Psoas muscle (tissue), 8 donors: ENCODE measurements at regions of chr20 and their contacts with region 1.

Region 1: GRCh38 chr20:45362804-45363610 is at the start of gene SYS1:
- DNase-seq: peak; percentile 98 to 99
- ATAC-seq: peak; percentile 75 to 85 (median 82)
- H3K4me3 ChIP-seq: peak within 1 kb of the TSS; percentile 83
- H3K27ac ChIP-seq: peak within 1 kb of the TSS; percentile 93
- H3K4me1 ChIP-seq: peaks cover 36% of the 10 kb centered on the region
- H3K27me3 ChIP-seq: no peaks in the 10 kb centered on the region
- CTCF ChIP-seq: peak; percentile 90
- total RNA-seq, gene SYS1: 17.1 to 29.6 (median 22.9) TPM

Region 2: DNA sequence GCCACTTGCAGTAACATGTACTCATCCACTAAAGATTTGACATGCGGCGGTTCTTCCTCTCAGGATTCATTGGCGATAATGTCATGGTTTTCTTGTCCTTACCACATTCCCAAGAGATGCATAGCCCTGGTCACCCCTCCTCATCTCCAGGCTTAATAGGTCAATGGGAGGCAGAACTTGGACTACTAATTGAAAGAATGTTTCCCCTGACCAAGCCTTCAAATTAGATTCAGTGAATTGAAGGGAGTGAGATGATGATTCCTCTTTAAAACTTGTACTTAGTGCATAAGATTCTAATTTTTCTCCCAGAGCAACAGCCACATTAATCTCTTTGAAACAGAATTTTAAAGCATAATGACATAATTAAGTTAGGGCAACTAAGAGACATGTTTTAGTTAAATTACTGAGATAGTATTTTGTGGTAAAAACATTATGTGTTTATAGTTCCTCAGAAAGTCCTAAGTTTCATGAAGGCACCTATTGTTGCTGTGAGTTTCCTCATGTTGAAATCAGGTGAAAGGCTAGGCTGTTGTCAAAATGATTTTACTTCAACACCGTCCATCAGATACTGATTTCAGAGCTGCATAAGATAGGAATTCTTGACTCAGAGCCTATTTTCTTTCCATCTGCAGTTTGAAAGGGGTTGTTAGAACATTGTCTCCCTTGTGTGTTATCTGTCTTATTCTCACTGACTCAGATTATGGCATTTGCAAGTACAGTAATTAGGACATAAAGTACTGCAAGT is 348.2 kb before region 1 on chr20:
- intact Hi-C with region 1: no loop called
- DNase-seq: no peak
- ATAC-seq: peak in 1 of 4 donors; percentile 25
- H3K4me3 ChIP-seq: no peak overlapping the region
- H3K27ac ChIP-seq: no peak overlapping the region
- H3K4me1 ChIP-seq: no peaks in the 10 kb centered on the region
- H3K27me3 ChIP-seq: no peaks in the 10 kb centered on the region
- CTCF ChIP-seq: no peak

Region 3: DNA sequence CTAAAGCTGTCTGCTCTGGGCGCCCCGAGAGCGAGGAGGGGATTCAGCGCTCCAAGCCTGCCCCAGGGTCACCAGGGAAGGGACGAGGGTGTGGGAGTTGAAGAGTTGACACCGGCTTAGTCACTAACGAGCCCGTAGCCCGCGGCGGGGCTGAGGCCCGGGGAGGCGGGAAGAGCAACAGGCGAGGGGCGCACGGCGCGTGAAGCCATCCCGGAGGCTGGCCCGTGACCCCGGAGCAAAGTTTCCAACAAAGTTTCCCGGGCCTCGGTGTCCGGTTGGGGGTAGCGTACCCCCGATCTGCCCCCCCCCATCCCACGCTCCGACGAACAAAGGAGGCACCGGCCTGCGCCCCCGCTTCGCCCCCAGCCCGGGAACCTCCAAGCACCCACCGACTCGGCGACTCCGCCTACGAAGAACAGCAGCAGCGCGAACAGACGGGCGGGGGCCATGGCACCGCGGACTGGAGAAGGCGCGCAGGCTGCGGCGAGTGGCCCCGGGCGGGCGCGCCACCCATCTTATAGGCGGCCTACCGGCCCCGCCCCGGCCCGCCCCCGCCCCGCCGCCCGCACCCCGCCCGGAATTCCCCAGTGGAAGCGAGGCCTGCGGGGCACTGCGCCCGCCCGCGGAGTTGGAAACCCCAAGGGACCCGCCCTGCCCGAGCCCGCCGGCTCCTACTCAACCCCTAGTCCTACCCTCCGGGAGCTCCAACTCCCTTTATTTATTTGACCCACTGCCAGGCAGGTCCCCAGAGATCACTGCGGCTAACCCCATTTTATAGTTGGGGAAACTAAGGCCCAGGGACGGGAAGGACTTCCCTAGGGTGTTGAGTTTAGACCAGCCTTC is 14.8 kb before region 1 on chr20 and contains the start of gene SDC4:
- intact Hi-C with region 1: loop called in 1 of 2 experiments (anchors 2 kb)
- DNase-seq: peak; percentile 79 to 88
- ATAC-seq: peak; percentile 62 to 74 (median 68)
- H3K4me3 ChIP-seq: peak within 1 kb of the TSS; percentile 79
- H3K27ac ChIP-seq: peak within 1 kb of the TSS; percentile 94
- H3K4me1 ChIP-seq: peaks cover 28% of the 10 kb centered on the region
- H3K27me3 ChIP-seq: no peaks in the 10 kb centered on the region
- CTCF ChIP-seq: no peak
- total RNA-seq, gene SDC4: 32.2 to 283 (median 161) TPM

Region 4: DNA sequence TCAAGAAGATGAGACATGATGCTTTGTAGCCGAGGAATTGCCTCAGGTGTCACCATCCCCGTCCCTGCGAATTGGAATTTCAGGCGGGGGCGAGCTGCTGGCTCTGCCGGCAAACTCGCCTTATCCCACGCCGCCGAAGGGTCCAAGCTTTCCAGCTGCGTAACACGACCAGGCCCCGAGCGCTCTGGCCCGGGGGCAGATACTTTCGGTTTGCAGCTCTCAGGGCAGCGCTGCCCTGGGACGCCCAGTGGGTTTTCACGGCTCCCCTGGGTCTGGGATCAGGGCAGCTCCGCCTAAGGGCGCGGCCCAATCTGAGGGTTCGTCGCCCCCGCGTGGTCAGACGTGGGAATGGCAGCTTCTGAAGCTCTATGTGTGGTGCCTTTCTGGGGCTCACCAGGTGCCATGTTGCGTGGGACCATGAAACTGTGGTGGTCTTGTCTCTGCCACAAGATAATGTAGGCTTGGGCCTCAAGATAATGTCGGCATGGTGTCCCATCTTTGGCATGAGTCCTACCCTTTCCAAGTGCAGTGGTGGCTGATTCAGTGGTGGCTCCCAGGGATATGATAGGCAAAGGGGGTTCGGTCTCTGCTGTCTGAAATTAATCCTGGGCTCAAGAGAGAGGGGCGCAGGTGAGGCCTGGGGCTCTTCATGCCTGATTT is 73.9 kb after region 1 on chr20:
- intact Hi-C with region 1: loop called in 1 of 2 experiments (anchors 2 kb)
- DNase-seq: peak; percentile 89 to 94
- ATAC-seq: peak; percentile 99 to 100 (median 99)
- H3K4me3 ChIP-seq: peak overlapping the region; percentile 83
- H3K27ac ChIP-seq: peak overlapping the region; percentile 72
- H3K4me1 ChIP-seq: peaks cover 7% of the 10 kb centered on the region
- H3K27me3 ChIP-seq: no peaks in the 10 kb centered on the region
- CTCF ChIP-seq: peak; percentile 97

Region 5: DNA sequence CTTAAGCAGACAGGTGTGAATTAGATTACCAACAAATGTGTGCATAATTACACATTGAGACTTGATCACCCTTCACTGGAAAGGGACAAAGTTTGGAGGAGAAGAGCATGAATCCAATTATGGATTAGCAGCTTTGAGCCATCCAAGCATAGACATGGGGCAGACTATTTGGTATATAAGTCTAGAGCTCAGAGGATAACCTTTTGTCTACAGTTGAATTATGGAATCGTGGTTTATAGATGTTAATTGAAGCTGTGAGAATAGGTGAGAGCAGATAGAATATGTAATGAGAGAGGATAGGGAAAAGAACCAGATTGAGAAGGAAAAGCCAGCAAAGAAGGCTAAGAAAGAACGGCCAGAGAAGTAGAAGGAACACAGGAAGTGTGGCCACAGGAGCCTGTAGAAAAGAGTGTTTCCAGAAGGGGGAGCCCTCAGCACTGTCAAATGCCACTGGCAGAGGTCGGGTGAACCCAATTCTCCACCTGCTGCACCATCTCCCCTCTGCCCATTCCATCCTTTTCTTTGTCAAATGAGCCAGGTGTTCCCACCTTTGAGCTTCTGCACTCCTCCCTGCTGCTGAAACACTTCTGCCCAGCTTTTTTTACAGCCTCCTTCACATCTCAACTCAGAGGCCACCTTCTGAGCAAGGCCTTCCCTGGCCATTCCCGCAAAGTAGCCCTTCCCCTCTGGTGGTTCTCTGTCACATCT is 436.1 kb after region 1 on chr20:
- intact Hi-C with region 1: loop called in 1 of 2 experiments (anchors 10 kb)
- DNase-seq: peak in 1 of 2 donors; percentile 44
- ATAC-seq: peak; percentile 55 to 67 (median 62)
- H3K4me3 ChIP-seq: no peak overlapping the region
- H3K27ac ChIP-seq: peak overlapping the region; percentile 80
- H3K4me1 ChIP-seq: peaks cover 32% of the 10 kb centered on the region
- H3K27me3 ChIP-seq: no peaks in the 10 kb centered on the region
- CTCF ChIP-seq: peak; percentile 74